ENCODE measurements at regions of chr13 and their contacts with region 1.

Region 1: DNA sequence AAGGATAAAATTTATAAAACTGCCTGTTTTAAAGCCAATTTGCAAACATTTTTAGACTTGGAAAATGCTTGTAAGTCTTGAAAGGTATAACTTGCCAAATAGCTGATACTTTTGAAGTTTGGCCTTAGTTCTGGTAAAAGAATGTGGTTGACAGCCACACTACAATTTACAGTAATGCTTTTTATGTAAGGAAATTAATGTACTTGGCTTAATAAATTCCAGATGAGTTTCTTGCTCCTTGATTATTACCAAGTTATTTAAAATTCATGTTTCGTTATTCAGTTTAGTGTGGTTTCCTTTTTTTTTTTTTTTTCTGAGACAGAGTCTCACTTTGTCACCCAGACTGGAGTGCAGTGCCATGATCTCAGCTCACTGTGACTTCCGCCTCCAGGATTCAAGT is 14.9 kb downstream of the LMO7 start:
- DNase-seq: no peak
- ATAC-seq: no peak

Region 2: GRCh38 chr13:75505327-75505726 is 145.7 kb before region 1 on chr13:
- intact Hi-C with region 1: no loop called
- DNase-seq: no peak
- ATAC-seq: peak; percentile 33

Region 3: GRCh38 chr13:75666646-75667351 is 15.8 kb after region 1 on chr13:
- intact Hi-C with region 1: loop called (anchors 1 kb)
- DNase-seq: no peak
- ATAC-seq: peak; percentile 44